Cardiac septum (tissue), 1 donor: ENCODE measurements at regions of chr22 and their contacts with region 1.

Region 1: DNA sequence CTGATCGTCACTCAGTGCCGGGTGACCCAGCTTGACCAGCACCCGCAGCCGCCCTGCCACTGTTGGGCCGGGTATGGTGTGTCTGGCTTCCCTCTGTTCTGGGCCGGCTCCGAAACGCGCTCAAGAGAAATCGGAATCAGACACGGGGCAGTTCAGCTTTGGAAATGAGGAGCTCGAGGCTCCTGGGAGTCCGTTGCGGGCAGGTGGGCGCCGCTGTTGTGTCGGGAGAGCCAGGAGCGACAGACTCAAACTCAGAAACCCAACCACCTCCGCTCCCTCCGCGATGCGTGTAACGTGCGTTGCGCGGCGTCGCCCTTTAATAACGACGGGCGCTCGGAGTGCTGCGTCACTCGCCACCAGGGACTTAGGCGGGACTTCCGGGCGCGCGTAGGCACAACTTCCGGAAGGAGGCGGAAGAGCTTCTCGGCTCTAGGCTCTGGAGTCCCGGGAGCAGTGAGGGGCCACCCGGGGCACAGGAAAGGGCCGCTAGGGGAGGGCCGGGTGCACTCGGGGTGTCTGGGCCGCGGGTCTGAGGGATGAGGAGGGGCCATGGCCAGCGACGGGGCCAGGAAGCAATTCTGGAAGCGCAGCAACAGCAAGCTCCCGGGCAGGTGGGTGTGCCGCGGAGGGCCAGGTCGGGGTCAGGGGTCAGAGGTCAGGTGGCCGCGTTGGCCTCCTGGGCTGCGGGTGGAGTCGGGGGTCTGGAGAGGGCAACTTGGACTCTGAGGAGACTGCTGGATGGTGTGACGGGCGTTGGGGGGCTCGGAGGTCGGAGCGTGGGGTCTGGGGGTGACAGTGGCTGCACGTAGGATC is at the start of gene TBC1D22A:
- DNase-seq: peak; percentile 97
- total RNA-seq, gene TBC1D22A: 20.1 TPM

Region 2: DNA sequence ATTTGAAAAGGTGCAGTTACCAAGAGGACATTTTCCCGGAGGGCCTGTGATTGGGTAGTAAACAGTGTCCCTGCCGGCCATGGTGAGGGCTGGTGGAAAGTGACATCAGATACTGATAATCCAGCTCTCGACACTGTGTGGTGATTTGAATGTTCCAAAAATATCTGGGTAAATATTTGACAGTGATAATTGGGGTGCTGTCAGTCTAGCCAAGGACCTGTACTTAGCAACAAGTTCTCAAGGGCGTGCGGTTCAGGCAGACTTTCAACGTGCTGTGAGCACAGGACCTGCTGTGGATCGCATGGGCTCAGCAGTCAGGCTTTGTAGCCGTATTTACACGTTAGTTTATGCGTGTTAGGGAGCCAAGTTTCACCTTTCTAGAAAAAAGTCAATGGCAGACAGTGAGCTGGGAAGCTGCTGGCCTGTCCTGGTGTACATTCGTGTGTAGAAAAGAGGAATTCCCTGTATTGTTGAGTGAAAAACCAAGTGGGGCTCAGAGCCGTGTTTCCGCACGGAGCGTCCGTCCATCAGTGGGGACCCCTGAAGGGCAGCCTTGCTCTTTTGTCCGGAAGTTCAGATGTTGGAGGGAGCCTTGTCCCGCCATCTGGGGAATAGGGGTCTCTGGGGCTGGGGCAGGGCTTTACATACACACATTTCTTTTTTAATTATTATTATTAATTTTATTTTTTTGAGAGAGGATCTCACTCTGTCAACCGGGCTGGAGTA is 415.6 kb before region 1 on chr22:
- intact Hi-C with region 1: loop called (anchors 10 kb)
- DNase-seq: no peak

Region 3: DNA sequence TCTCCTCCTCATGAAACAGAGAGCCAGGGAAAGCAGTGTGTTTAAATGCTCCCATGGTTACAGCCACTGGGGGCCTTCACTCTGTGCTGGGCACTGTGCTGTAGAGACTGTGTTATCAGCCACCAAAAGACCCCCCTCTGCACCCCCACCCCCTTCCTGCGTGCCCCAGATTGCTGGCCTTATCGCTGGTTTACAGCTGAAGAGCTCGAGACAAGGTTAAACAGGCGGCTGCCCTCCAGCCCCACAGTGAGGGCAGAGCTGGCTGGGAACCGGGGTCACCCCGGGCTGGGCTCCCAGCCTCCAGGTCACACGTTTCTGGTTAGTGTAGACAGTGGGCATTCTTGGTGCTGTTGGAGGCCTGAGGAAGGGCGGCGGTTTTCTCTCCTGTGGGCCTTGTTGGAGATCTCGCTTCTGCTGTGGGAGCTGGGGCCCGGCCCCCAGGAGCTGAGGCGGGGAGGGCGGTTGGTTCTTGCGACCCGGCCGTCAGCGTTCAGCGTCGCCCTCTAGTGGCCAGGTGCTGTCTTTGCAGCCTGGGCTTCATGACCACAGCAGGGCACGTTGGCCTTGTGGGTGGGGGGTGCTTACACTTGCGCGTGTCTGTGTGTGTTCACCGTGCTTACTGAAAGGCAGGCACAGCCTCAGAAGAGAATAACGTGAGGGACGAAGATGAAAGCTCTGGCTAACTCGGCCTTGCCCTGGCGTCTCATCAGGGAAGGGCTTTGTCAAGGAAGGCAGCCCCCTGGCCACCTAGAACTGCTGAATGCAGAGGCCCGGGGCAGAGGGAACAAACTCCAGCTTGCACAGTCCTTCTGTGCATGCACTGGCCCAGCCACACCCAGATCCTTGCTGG is 40.8 kb after region 1 on chr22:
- intact Hi-C with region 1: loop called (anchors 2 kb)
- DNase-seq: peak; percentile 85